ENCODE measurements at regions of chr1 and their contacts with region 1.

Region 1: DNA sequence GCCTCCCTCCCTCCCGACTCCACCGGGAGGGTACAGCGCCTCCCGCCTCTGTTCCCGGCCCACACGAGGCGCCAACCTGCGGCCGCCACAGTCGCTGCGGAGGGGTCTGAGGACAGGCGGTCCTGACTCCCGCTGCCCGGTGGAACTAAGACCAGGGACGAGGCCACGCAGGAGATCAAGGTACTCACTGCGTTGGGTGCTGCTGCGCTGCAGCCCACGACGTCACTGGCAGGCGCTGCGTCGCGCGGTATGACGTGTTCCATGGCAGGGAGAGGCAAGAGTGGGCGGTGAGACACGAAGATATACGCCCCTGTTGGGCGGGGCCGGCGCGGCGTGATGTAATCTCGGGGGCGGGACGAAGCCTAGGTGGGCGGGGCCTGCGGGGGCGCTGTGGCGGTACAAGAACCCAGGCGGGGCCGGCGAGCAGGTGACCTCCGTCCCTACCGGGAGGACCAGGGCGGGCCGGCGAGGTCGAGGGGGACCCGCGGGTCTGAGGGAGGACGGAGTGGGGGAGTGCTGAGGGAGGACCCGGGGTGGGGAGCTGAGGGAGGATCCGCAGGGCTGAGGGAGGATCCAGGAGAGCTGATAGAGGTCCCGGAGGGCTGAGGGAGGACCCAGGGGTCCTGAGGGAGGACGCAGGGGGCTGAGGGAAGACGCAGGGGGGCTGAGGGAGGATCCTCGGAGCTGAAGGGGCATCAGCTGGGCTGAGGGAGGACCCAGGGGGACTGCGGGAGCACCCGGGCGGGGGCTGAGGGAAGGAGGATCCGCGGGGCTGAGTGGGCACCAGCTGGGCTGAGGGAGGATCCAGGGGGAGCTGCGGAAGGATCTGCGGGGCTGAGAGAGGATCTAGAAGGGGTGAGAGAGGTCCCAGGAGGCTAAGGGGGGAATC is at the start of gene MRPL55:
- DNase-seq: peak; percentile 100
- ATAC-seq: peak; percentile 96
- H3K4me3 Mint-ChIP-seq: peak within 1 kb of the TSS; percentile 92
- H3K27ac Mint-ChIP-seq: peak within 1 kb of the TSS; percentile 93
- H3K4me1 Mint-ChIP-seq: peaks cover 24% of the 10 kb centered on the region
- H3K27me3 Mint-ChIP-seq: no peaks in the 10 kb centered on the region
- CTCF ChIP-seq: no peak
- total RNA-seq, gene MRPL55: 34.0 and 34.3 TPM in 2 replicates

Region 2: DNA sequence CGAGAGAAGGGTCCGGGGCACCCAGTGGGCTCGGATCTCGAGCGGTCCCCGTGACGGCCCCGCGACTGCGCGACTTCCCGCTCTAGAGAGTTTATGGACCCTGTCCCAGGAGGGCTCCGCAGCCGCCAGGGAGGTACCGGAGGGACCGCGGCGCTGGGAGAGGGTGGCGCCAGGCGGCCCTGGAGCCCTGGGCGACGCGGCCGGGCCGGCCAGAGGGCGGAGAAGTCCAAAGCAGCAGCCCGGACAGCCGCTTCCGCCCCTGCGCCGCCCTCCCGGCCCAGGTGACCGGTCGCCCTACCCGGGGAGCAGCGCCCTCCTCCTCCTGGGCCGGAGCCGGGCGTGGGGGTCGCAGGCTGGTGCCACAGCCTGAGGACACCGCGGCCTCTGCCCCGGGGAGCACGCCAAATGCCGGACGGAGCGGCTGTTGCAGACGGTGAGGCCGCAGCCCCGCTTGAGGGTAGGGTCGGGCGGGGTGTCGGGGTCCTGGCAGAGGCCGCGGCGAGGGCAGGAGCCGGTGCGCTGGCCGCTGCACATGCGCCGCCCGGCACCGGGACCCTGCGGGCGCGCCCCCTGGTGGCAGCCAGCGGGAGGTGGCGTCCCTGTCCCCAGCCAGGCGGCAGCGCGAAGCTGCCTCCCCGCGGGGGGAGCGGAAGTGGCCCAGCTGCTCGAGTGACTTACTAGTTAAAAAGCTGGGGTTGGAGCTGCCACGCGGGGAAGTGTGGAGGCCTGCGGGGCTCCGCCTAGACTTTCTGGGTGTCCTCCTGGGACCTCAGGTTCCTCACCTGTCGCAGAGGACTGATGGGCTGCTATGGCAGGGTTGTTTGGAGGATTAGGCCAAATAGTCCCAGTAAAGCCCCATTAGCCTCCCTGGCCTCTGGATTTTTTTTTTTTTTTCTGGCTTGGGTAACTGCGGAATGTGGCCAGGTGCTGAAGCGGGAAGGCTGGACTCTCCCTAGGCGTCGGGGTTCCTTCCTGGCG is 566.9 kb before region 1 on chr1:
- CTCF ChIA-PET with region 1: no interaction called
- POLR2A ChIA-PET with region 1: no interaction called
- intact Hi-C with region 1: loop called (anchors 10 kb)
- DNase-seq: peak; percentile 90
- ATAC-seq: peak; percentile 97
- H3K4me3 Mint-ChIP-seq: peak overlapping the region; percentile 68
- H3K27ac Mint-ChIP-seq: no peak overlapping the region
- H3K4me1 Mint-ChIP-seq: peaks cover 5% of the 10 kb centered on the region
- H3K27me3 Mint-ChIP-seq: no peaks in the 10 kb centered on the region
- CTCF ChIP-seq: peak; percentile 65

Region 3: DNA sequence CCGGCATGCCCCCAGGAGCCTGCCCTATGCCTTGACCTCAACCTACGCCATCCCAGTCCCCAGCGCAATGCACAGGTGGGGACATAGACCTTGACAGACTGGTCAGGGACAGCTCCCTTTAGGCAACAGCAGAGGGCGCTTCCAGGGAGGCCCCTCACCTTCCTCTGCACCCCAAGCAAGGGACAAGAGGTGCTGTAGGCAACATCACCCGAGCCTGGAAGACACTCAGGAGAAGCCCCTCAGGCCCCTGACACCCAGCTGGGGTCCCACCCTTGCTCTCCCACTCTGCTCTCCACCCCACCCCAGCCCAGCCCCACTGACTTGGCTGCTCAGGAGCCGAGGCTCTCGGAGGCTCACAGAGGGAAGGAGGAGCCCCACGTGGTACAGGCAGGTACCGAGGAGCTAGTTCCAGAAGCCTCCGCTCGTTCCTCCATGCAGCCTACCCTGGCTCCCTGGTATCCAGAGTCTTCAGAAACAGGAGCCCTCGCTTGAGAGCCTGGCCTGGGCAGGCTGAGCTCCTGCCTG is 104.9 kb before region 1 on chr1:
- CTCF ChIA-PET with region 1: no interaction called
- POLR2A ChIA-PET with region 1: no interaction called
- intact Hi-C with region 1: loop called (anchors 10 kb)
- DNase-seq: no peak
- ATAC-seq: no peak
- H3K4me3 Mint-ChIP-seq: no peak overlapping the region
- H3K27ac Mint-ChIP-seq: no peak overlapping the region
- H3K4me1 Mint-ChIP-seq: peaks cover 19% of the 10 kb centered on the region
- H3K27me3 Mint-ChIP-seq: peaks cover 49% of the 10 kb centered on the region
- CTCF ChIP-seq: no peak

Region 4: DNA sequence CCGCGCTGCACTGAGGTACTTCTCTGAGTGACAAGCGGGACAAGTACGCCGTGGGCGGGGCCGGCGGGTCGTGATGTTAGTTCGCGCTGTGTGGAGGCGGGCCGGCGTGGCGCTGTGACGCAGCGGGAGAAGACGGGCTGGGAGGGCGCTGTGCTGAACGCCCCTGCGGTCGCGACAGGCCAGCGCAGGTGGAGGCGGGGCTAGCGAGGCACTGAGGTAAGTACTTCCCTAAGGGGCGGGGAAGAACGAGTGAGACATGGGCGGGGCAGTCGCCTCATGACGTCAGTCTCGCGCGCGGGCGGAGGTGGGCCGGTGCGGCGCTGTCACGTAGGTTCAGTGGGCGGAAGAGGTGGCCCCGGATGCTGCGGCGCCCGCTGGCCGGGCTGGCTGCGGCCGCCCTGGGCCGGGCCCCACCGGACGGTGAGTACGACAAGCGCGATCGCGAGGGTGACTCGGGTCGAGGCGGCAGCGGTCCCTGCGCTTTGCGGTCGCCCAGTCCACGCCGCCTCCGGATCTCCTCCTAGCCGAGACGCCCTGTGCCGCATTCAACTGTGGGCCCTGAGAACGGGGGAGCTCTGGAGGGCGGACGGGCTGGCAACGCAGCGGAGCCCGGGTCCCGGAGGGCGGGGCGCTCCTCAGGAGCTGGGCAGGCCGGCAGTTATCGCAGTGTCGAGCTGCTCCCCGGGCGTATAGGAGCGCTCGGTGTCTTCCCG is 30.8 kb after region 1 on chr1 and contains the start of gene GUK1:
- CTCF ChIA-PET with region 1: no interaction called
- POLR2A ChIA-PET with region 1: interaction called, 21 read pairs
- intact Hi-C with region 1: loop called (anchors 1 kb)
- DNase-seq: peak; percentile 99
- ATAC-seq: peak; percentile 92
- H3K4me3 Mint-ChIP-seq: peak within 1 kb of the TSS; percentile 96
- H3K27ac Mint-ChIP-seq: peak within 1 kb of the TSS; percentile 99
- H3K4me1 Mint-ChIP-seq: peaks cover 71% of the 10 kb centered on the region
- H3K27me3 Mint-ChIP-seq: no peaks in the 10 kb centered on the region
- CTCF ChIP-seq: no peak
- total RNA-seq, gene GUK1: 104 and 119 TPM in 2 replicates

Region 5: GRCh38 chr1:228174482-228175375 is 65.4 kb after region 1 on chr1:
- CTCF ChIA-PET with region 1: no interaction called
- POLR2A ChIA-PET with region 1: interaction called, 11 read pairs
- intact Hi-C with region 1: loop called (anchors 2 kb)
- DNase-seq: no peak
- ATAC-seq: peak; percentile 59
- H3K4me3 Mint-ChIP-seq: no peak overlapping the region
- H3K27ac Mint-ChIP-seq: no peak overlapping the region
- H3K4me1 Mint-ChIP-seq: peaks cover 6% of the 10 kb centered on the region
- H3K27me3 Mint-ChIP-seq: no peaks in the 10 kb centered on the region
- CTCF ChIP-seq: no peak

Region 6: DNA sequence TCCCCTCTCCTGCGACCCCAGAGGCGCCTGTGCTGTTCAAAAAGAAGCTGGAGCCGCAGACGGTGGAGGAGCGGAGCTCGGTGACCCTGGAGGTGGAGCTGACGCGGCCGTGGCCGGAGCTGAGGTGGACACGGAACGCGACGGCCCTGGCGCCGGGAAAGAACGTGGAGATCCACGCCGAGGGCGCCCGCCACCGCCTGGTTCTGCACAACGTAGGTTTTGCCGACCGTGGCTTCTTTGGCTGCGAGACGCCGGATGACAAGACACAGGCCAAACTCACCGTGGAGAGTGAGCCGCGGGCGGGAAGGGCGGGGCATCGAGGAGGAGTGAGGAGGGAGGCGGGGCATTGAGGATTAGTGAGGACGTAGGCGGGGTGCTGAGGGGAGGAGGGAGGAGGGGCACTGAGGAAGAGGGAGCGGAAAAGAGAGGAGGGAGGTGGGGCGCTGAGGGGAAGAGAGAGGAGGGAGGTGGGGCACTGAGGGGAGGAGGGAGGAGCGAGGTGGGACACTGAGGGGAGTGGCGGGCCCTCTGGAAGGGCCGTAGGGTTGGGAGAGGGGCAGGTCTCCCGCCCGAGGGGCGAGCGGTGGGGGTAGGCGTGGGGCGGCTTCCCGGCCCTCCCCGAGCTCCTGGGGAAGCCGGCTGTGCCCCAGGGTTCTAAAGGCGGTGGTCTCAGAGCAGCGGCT is 166.6 kb after region 1 on chr1:
- CTCF ChIA-PET with region 1: no interaction called
- POLR2A ChIA-PET with region 1: no interaction called
- intact Hi-C with region 1: loop called (anchors 1 kb)
- DNase-seq: peak; percentile 66
- ATAC-seq: peak; percentile 98
- H3K4me3 Mint-ChIP-seq: peak overlapping the region; percentile 82
- H3K27ac Mint-ChIP-seq: no peak overlapping the region
- H3K4me1 Mint-ChIP-seq: peaks cover 8% of the 10 kb centered on the region
- H3K27me3 Mint-ChIP-seq: no peaks in the 10 kb centered on the region
- CTCF ChIP-seq: no peak

Region 7: DNA sequence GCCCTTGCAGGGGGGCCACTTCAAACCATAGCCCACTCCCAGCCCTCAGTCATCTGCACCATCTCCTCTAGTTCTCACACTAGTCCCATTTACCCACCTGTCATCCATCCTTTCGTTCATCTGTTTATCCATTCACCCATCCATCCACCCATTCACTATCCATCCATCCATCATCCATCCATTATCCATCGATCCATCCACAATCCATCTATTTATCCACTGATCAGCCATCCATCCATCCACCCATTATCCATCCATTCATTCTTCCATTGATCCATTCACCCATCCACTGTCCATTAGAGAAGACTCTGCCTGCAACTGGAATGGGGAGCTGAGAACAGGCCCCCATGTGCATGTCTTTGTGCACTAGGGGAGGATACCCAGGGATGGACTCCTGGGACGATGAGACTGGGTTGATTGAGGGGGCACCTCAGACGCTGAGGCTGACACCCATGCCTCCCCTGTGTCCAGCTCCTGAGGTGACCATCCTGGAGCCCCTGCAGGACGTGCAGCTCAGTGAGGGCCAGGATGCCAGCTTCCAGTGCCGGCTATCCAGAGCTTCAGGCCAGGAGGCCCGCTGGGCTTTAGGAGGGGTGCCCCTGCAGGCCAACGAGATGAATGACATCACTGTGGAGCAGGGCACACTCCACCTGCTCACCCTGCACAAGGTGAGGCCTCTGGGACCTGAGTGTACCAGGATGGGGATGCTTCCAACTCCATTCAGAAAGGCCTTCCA is 199.5 kb after region 1 on chr1:
- CTCF ChIA-PET with region 1: no interaction called
- POLR2A ChIA-PET with region 1: no interaction called
- intact Hi-C with region 1: no loop called
- DNase-seq: no peak
- ATAC-seq: no peak
- H3K4me3 Mint-ChIP-seq: no peak overlapping the region
- H3K27ac Mint-ChIP-seq: no peak overlapping the region
- H3K4me1 Mint-ChIP-seq: no peaks in the 10 kb centered on the region
- H3K27me3 Mint-ChIP-seq: no peaks in the 10 kb centered on the region
- CTCF ChIP-seq: no peak

Measured in activated B cell treated with CpG ODN at 0.5 μM for 24 hours (primary cell).